ENCODE measurements at regions of chr19 and their contacts with region 1.

Region 1: GRCh38 chr19:10565567-10566407 is at the start of gene KRI1:
- DNase-seq: peak; percentile 100
- ATAC-seq: peak; percentile 63
- H3K4me3 ChIP-seq: peak within 1 kb of the TSS; percentile 92 to 99 (median 97)
- H3K4me3 Mint-ChIP-seq: peak within 1 kb of the TSS; percentile 95
- H3K27ac ChIP-seq: peak within 1 kb of the TSS; percentile 87 to 88
- H3K27ac Mint-ChIP-seq: peak within 1 kb of the TSS; percentile 96
- H3K4me1 ChIP-seq: peaks cover 28 to 41% of the 10 kb centered on the region in 2 donors
- H3K4me1 Mint-ChIP-seq: peaks cover 44% of the 10 kb centered on the region
- H3K27me3 ChIP-seq: no peaks in the 10 kb centered on the region
- H3K27me3 Mint-ChIP-seq: no peaks in the 10 kb centered on the region
- CTCF ChIP-seq: peak; percentile 51
- total RNA-seq, gene KRI1: 62.8 and 67.9 TPM in 2 replicates

Region 2: DNA sequence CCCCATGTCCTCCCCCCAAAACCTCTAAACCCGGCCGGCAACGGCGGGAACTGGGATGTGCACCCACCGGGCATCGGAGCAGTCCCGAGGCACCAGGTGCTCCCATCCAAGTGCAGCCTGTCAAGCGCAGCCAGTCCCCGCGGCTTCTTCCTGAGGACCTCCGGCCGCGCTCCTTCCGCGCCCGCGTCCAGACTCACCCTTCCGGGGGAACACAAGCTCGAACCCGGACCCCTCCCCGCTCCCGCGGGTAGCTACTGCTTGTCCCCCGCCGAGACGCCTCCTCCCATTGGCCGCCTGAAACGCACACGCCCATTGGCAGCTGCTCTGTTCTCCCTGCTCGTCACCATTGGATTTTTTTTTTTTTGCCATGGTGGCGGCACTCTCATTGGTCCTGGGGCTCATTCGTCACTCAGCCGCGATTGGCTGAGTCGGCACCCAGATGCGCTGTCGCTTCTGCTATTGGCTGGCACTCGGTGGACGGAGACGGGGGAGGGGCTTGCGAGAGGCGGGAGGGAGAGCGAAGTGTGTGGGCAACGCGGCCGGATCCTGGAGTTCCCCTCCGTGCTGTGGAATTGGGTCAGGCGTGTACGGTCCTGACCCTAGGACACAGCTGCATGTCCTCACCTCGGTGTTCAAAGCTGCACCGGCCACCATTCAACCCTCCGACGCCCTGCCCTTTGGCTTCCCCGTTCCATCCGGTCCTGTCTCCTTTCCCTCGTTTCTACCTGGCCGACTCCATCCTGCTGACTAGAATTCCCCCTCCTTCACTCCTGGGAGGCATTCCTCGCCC is 185.3 kb before region 1 on chr19 and contains the start of gene TYK2:
- CTCF ChIA-PET with region 1: no interaction called
- POLR2A ChIA-PET with region 1: no interaction called
- intact Hi-C with region 1: loop called (anchors 1 kb)
- DNase-seq: peak; percentile 99
- ATAC-seq: peak; percentile 91
- H3K4me3 ChIP-seq: peak within 1 kb of the TSS; percentile 63 to 99 (median 90)
- H3K4me3 Mint-ChIP-seq: peak within 1 kb of the TSS; percentile 87
- H3K27ac ChIP-seq: peak within 1 kb of the TSS; percentile 78 to 91
- H3K27ac Mint-ChIP-seq: peak within 1 kb of the TSS; percentile 91
- H3K4me1 ChIP-seq: peaks cover 10 to 17% of the 10 kb centered on the region in 2 donors
- H3K4me1 Mint-ChIP-seq: peaks cover 21% of the 10 kb centered on the region
- H3K27me3 ChIP-seq: no peaks in the 10 kb centered on the region
- H3K27me3 Mint-ChIP-seq: no peaks in the 10 kb centered on the region
- CTCF ChIP-seq: no peak
- total RNA-seq, gene TYK2: 337 and 347 TPM in 2 replicates

Region 3: GRCh38 chr19:10502524-10503001 is 63.2 kb before region 1 on chr19:
- CTCF ChIA-PET with region 1: interaction called, 3 read pairs
- POLR2A ChIA-PET with region 1: interaction called, 10 read pairs
- intact Hi-C with region 1: loop called (anchors 1 kb)
- DNase-seq: peak; percentile 87
- ATAC-seq: peak; percentile 87
- H3K4me3 ChIP-seq: peak overlapping the region in 4 of 5 experiments; percentile 72 to 87 (median 78)
- H3K4me3 Mint-ChIP-seq: peak overlapping the region; percentile 88
- H3K27ac ChIP-seq: peak overlapping the region; percentile 63 to 69
- H3K27ac Mint-ChIP-seq: peak overlapping the region; percentile 85
- H3K4me1 ChIP-seq: peaks cover 6 to 18% of the 10 kb centered on the region in 2 donors
- H3K4me1 Mint-ChIP-seq: peaks cover 22% of the 10 kb centered on the region
- H3K27me3 ChIP-seq: no peaks in the 10 kb centered on the region
- H3K27me3 Mint-ChIP-seq: no peaks in the 10 kb centered on the region
- CTCF ChIP-seq: no peak

Region 4: GRCh38 chr19:10551698-10552301 is 14.0 kb before region 1 on chr19:
- CTCF ChIA-PET with region 1: interaction called, 12 read pairs
- POLR2A ChIA-PET with region 1: interaction called, 26 read pairs
- intact Hi-C with region 1: loop called (anchors 1 kb)
- DNase-seq: no peak
- ATAC-seq: no peak
- H3K4me3 ChIP-seq: no peak overlapping the region
- H3K4me3 Mint-ChIP-seq: no peak overlapping the region
- H3K27ac ChIP-seq: peak overlapping the region in 1 of 2 donors; percentile 81
- H3K27ac Mint-ChIP-seq: peak overlapping the region; percentile 78
- H3K4me1 ChIP-seq: peaks cover 37 to 44% of the 10 kb centered on the region in 2 donors
- H3K4me1 Mint-ChIP-seq: peaks cover 34% of the 10 kb centered on the region
- H3K27me3 ChIP-seq: no peaks in the 10 kb centered on the region
- H3K27me3 Mint-ChIP-seq: no peaks in the 10 kb centered on the region
- CTCF ChIP-seq: no peak

Region 5: DNA sequence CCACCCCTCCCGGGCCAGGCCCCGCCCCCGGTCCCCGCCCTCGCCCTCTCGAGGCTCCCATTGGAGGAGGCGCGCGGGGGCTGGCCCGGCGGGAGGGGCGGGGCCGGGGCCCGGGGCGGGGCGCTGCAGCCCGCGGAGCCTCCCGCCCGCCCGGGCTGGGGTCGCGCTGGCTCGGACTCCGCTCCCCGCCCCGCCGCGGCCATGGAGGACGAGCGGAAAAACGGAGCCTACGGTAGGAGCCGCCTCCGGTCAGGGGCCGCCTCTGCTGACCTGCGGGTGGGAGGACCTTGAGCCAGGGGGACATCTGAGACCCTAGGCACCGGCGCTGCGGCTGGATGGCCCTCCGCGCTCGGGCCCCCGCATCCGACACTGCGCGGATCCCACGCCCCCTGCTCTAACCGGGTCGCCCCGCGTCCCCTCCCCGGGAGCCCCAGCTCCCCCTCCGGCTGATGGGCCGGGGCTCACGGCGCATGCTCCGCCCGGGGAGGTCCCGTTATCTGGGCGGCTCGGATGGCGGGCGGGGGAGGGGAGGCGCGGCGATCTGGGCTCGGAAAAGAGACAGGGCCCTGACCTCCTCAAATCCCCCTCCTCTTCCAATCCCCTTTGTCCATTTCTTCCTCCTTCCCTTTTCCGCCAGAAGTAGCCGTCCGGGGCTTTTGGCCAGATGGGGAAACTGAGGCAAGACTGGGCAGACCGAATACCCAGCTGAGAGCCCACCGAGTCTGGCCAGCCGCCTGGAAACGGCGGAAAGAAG is 36.7 kb after region 1 on chr19:
- CTCF ChIA-PET with region 1: interaction called, 4 read pairs
- POLR2A ChIA-PET with region 1: interaction called, 16 read pairs
- intact Hi-C with region 1: loop called (anchors 1 kb)
- DNase-seq: peak; percentile 86
- ATAC-seq: peak; percentile 73
- H3K4me3 ChIP-seq: peak overlapping the region; percentile 89 to 100 (median 94)
- H3K4me3 Mint-ChIP-seq: peak overlapping the region; percentile 96
- H3K27ac ChIP-seq: peak overlapping the region; percentile 97 to 99
- H3K27ac Mint-ChIP-seq: peak overlapping the region; percentile 99
- H3K4me1 ChIP-seq: peaks cover 30 to 47% of the 10 kb centered on the region in 2 donors
- H3K4me1 Mint-ChIP-seq: peaks cover 37% of the 10 kb centered on the region
- H3K27me3 ChIP-seq: no peaks in the 10 kb centered on the region
- H3K27me3 Mint-ChIP-seq: no peaks in the 10 kb centered on the region
- CTCF ChIP-seq: no peak

Region 6: GRCh38 chr19:10625003-10625776 is 59.4 kb after region 1 on chr19 and contains the start of gene SLC44A2:
- CTCF ChIA-PET with region 1: no interaction called
- POLR2A ChIA-PET with region 1: no interaction called
- intact Hi-C with region 1: no loop called
- DNase-seq: no peak
- ATAC-seq: no peak
- H3K4me3 ChIP-seq: no peak within 1 kb of the TSS
- H3K4me3 Mint-ChIP-seq: no peak within 1 kb of the TSS
- H3K27ac ChIP-seq: peak within 1 kb of the TSS in 1 of 2 donors; percentile 39
- H3K27ac Mint-ChIP-seq: peak within 1 kb of the TSS; percentile 56
- H3K4me1 ChIP-seq: peaks cover 6 to 35% of the 10 kb centered on the region in 2 donors
- H3K4me1 Mint-ChIP-seq: peaks cover 38% of the 10 kb centered on the region
- H3K27me3 ChIP-seq: no peaks in the 10 kb centered on the region
- H3K27me3 Mint-ChIP-seq: no peaks in the 10 kb centered on the region
- CTCF ChIP-seq: no peak
- total RNA-seq, gene SLC44A2: 369 and 409 TPM in 2 replicates

Region 7: GRCh38 chr19:10653715-10654492 is 88.1 kb after region 1 on chr19 and contains the start of gene ILF3:
- CTCF ChIA-PET with region 1: interaction called, 102 read pairs
- POLR2A ChIA-PET with region 1: interaction called, 4 read pairs
- intact Hi-C with region 1: loop called (anchors 1 kb)
- DNase-seq: peak; percentile 100
- ATAC-seq: peak; percentile 80
- H3K4me3 ChIP-seq: peak within 1 kb of the TSS; percentile 67 to 100 (median 96)
- H3K4me3 Mint-ChIP-seq: peak within 1 kb of the TSS; percentile 98
- H3K27ac ChIP-seq: peak within 1 kb of the TSS; percentile 99 to 100
- H3K27ac Mint-ChIP-seq: peak within 1 kb of the TSS; percentile 100
- H3K4me1 ChIP-seq: peaks cover 28 to 35% of the 10 kb centered on the region in 2 donors
- H3K4me1 Mint-ChIP-seq: peaks cover 42% of the 10 kb centered on the region
- H3K27me3 ChIP-seq: no peaks in the 10 kb centered on the region
- H3K27me3 Mint-ChIP-seq: no peaks in the 10 kb centered on the region
- CTCF ChIP-seq: no peak
- total RNA-seq, gene ILF3: 359 and 378 TPM in 2 replicates

Region 8: GRCh38 chr19:10835754-10836477 is 270.1 kb after region 1 on chr19 and contains the start of gene TMED1:
- CTCF ChIA-PET with region 1: no interaction called
- POLR2A ChIA-PET with region 1: interaction called, 3 read pairs
- intact Hi-C with region 1: loop called (anchors 1 kb)
- DNase-seq: peak; percentile 97
- ATAC-seq: peak; percentile 85
- H3K4me3 ChIP-seq: peak within 1 kb of the TSS; percentile 64 to 97 (median 94)
- H3K4me3 Mint-ChIP-seq: peak within 1 kb of the TSS; percentile 96
- H3K27ac ChIP-seq: peak within 1 kb of the TSS; percentile 95 to 97
- H3K27ac Mint-ChIP-seq: peak within 1 kb of the TSS; percentile 100
- H3K4me1 ChIP-seq: peaks cover 7 to 17% of the 10 kb centered on the region in 2 donors
- H3K4me1 Mint-ChIP-seq: peaks cover 14% of the 10 kb centered on the region
- H3K27me3 ChIP-seq: no peaks in the 10 kb centered on the region
- H3K27me3 Mint-ChIP-seq: no peaks in the 10 kb centered on the region
- CTCF ChIP-seq: no peak
- total RNA-seq, gene TMED1: 13.1 and 14.7 TPM in 2 replicates

Measured in B cell (primary cell).